ENCODE measurements at regions of chr3 and their contacts with region 1.

Region 1: DNA sequence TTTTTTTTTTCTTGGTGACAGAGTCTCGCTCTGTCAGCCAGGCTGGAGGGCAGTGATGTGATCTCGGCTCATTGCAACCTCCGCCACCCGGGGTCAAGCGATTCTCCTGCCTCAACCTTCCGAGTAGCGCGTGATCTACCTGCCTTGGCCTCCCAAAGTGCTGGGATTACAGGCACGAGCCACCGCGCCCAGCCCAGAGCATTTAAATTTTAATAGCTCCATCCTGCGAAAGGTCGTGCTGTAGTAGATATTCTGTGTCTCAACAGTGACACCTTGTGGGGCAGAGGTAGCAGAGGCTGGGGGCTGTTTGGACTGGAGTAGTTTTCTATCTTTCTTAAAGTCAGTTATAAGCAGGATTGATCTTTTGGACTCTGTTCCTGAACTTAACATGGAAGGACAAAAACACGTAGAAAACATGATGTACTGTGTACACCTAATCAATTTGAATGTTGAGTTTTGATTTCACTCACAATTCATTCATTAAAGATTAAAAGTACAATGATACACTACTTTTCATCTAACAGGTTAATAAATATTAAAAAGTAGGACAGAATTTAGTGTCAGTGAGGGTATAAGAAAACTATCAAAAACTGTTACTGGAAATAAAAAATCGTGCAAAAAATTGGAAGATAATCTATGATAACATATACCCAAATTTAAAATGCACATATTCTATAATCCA is 11.0 kb upstream of the PDCD6IP start:
- DNase-seq: peak; percentile 72
- ATAC-seq: peak; percentile 93
- H3K4me3 Mint-ChIP-seq: peak overlapping the region; percentile 6
- H3K27ac Mint-ChIP-seq: no peak overlapping the region
- H3K4me1 Mint-ChIP-seq: peaks cover 13% of the 10 kb centered on the region
- H3K27me3 Mint-ChIP-seq: peaks cover 24% of the 10 kb centered on the region

Region 2: GRCh38 chr3:33372218-33373081 is 415.0 kb before region 1 on chr3:
- CTCF ChIA-PET with region 1: interaction called, 17 read pairs
- POLR2A ChIA-PET with region 1: no interaction called
- DNase-seq: peak; percentile 66
- ATAC-seq: peak; percentile 65
- H3K4me3 Mint-ChIP-seq: no peak overlapping the region
- H3K27ac Mint-ChIP-seq: no peak overlapping the region
- H3K4me1 Mint-ChIP-seq: peaks cover 3% of the 10 kb centered on the region
- H3K27me3 Mint-ChIP-seq: peaks cover 2% of the 10 kb centered on the region

Region 3: DNA sequence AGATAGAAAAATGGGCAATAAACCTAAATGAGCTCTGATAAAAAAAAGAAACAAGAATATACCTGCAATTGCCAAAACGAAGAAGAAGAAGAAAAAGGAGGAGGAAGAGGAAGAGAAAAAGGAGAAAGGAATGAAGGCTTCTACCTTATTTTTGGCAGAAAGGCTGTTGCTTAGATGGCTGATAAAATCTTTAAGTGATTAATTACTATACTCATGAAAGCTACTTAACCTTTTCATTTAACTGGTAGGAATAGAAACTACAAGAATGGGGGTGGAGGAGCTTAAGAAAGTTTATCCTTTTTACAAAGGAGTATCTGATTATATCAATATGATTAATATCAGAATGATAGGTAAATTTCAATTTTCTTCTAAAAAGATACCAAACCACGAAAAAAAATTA is 144.7 kb before region 1 on chr3:
- CTCF ChIA-PET with region 1: interaction called, 23 read pairs
- POLR2A ChIA-PET with region 1: no interaction called
- DNase-seq: no peak
- ATAC-seq: no peak
- H3K4me3 Mint-ChIP-seq: no peak overlapping the region
- H3K27ac Mint-ChIP-seq: no peak overlapping the region
- H3K4me1 Mint-ChIP-seq: peaks cover 10% of the 10 kb centered on the region
- H3K27me3 Mint-ChIP-seq: no peaks in the 10 kb centered on the region

Region 4: GRCh38 chr3:33687406-33688010 is 100.0 kb before region 1 on chr3:
- CTCF ChIA-PET with region 1: no interaction called
- POLR2A ChIA-PET with region 1: no interaction called
- DNase-seq: no peak
- ATAC-seq: no peak
- H3K4me3 Mint-ChIP-seq: no peak overlapping the region
- H3K27ac Mint-ChIP-seq: no peak overlapping the region
- H3K4me1 Mint-ChIP-seq: peaks cover 3% of the 10 kb centered on the region
- H3K27me3 Mint-ChIP-seq: no peaks in the 10 kb centered on the region

Region 5: GRCh38 chr3:33773637-33774036 is 13.8 kb before region 1 on chr3:
- CTCF ChIA-PET with region 1: interaction called, 67 read pairs
- POLR2A ChIA-PET with region 1: no interaction called
- DNase-seq: no peak
- ATAC-seq: no peak
- H3K4me3 Mint-ChIP-seq: no peak overlapping the region
- H3K27ac Mint-ChIP-seq: no peak overlapping the region
- H3K4me1 Mint-ChIP-seq: no peaks in the 10 kb centered on the region
- H3K27me3 Mint-ChIP-seq: peaks cover 7% of the 10 kb centered on the region

Measured in activated CD8-positive, alpha-beta T cell treated with anti-CD3 and anti-CD28 coated beads, Interleukin-2, amount 10 ng/mL, durations not matched to agents 7 days and 5 days (primary cell).